ENCODE measurements at regions of chr22 and their contacts with region 1.

Region 1: GRCh38 chr22:43090130-43090789 is 1.1 kb upstream of the TTLL1 start:
- DNase-seq: peak; percentile 88
- ATAC-seq: peak; percentile 45
- H3K4me3 ChIP-seq: peak overlapping the region in 1 of 3 experiments; percentile 86; a peak in 1 of 6 replicates
- H3K27ac ChIP-seq: no peak overlapping the region
- H3K4me1 ChIP-seq: peaks cover 37% of the 10 kb centered on the region
- H3K27me3 ChIP-seq: no peaks in the 10 kb centered on the region
- CTCF ChIP-seq: peak; percentile 89
- EP300 ChIP-seq: no peak
- POLR2A ChIP-seq: no peak
- RAD21 ChIP-seq: peak; percentile 63

Region 2: DNA sequence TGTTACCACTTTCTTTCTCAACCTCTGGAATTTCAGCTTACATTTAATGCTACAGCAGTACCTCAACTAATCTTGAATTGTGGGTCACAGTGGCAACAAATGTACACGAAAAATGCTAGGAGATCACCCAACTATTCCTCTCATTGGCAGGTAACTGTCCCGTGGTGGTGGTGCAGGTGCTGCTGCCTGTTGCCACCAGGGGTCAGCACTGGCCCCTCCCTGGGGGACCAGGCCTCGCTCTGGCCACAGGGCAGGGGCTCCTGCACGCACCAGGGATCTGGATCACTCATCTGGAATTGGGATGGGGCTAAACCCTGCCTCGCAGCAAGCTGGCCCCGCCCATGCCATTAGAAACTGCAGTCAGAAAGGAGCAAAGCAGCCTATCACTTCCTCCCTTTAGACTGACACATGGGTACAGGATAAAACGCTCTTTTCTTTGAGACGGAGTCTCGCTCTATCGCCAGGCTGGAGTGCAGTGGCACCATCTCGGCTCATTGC is 468.7 kb before region 1 on chr22:
- CTCF ChIA-PET with region 1: no interaction called
- POLR2A ChIA-PET with region 1: no interaction called
- in situ Hi-C with region 1: no loop called
- intact Hi-C with region 1: loop called (anchors 5 kb)
- DNase-seq: peak; percentile 47
- ATAC-seq: peak; percentile 85
- H3K4me3 ChIP-seq: no peak overlapping the region
- H3K27ac ChIP-seq: no peak overlapping the region
- H3K4me1 ChIP-seq: peaks cover 2% of the 10 kb centered on the region; the same call in 1 of the 2 replicates
- H3K27me3 ChIP-seq: no peaks in the 10 kb centered on the region
- CTCF ChIP-seq: peak; percentile 94
- EP300 ChIP-seq: no peak
- POLR2A ChIP-seq: no peak
- RAD21 ChIP-seq: peak; percentile 92

Region 3: GRCh38 chr22:43126480-43127165 is 36.4 kb after region 1 on chr22:
- CTCF ChIA-PET with region 1: no interaction called
- POLR2A ChIA-PET with region 1: no interaction called
- in situ Hi-C with region 1: no loop called
- intact Hi-C with region 1: loop called (anchors 5 kb)
- DNase-seq: peak; percentile 65
- ATAC-seq: peak; percentile 79
- H3K4me3 ChIP-seq: peak overlapping the region in 1 of 3 experiments; percentile 57; a peak in 2 of 6 replicates
- H3K27ac ChIP-seq: no peak overlapping the region
- H3K4me1 ChIP-seq: peaks cover 31% of the 10 kb centered on the region
- H3K27me3 ChIP-seq: no peaks in the 10 kb centered on the region
- CTCF ChIP-seq: no peak
- EP300 ChIP-seq: no peak
- POLR2A ChIP-seq: no peak
- RAD21 ChIP-seq: no peak

Region 4: DNA sequence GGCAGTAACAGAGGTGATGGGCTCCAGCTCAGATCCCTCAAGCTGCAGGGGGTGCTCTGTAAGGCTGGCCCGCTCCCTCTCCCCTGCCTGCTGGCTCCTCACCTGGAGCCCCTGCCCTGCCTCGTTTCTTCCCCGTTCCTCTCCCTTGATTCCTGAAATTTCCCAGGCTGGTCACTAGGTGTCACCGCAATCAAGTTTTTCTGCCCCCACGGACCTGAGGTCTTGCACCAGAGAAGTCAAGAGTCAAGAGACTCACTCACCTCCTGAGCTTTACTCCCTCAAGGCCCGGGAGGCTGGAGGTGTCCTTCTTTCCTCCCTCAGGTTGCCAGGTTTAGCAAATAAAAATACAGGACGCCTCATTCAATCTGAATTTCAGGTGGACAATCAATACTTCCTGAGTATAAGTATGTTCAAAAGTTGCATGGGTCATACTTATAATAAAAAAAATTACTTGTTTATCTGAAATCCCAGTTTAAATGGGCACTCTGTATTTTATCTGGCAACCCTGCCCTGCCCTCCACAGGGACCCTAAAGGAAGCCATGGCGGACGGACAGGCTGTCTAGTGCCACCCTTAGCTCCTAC is 183.7 kb after region 1 on chr22:
- CTCF ChIA-PET with region 1: no interaction called
- POLR2A ChIA-PET with region 1: no interaction called
- in situ Hi-C with region 1: no loop called
- intact Hi-C with region 1: no loop called
- DNase-seq: peak; percentile 47
- ATAC-seq: peak; percentile 58
- H3K4me3 ChIP-seq: no peak overlapping the region
- H3K27ac ChIP-seq: no peak overlapping the region
- H3K4me1 ChIP-seq: peaks cover 8% of the 10 kb centered on the region
- H3K27me3 ChIP-seq: peaks cover 11 to 46% of the 10 kb centered on the region in 2 experiments
- CTCF ChIP-seq: peak; percentile 89
- EP300 ChIP-seq: no peak
- POLR2A ChIP-seq: no peak
- RAD21 ChIP-seq: peak; percentile 73

Region 5: GRCh38 chr22:43561415-43562178 is 471.3 kb after region 1 on chr22:
- CTCF ChIA-PET with region 1: no interaction called
- POLR2A ChIA-PET with region 1: no interaction called
- in situ Hi-C with region 1: no loop called
- intact Hi-C with region 1: no loop called
- DNase-seq: no peak
- ATAC-seq: no peak
- H3K4me3 ChIP-seq: no peak overlapping the region
- H3K27ac ChIP-seq: no peak overlapping the region
- H3K4me1 ChIP-seq: no peaks in the 10 kb centered on the region
- H3K27me3 ChIP-seq: 0 out of 5 replicates have a peak, but pooled peaks cover 0 to 2% of the 10 kb centered on the region in 2 experiments
- CTCF ChIP-seq: no peak
- EP300 ChIP-seq: no peak
- POLR2A ChIP-seq: no peak
- RAD21 ChIP-seq: no peak